ENCODE measurements at regions of chr10 and their contacts with region 1.

Region 1: GRCh38 chr10:25113191-25114035 is 61.4 kb upstream of the GPR158 start:
- DNase-seq: no peak
- ATAC-seq: peak; percentile 31
- H3K4me3 Mint-ChIP-seq: no peak overlapping the region
- H3K27ac Mint-ChIP-seq: no peak overlapping the region
- H3K4me1 Mint-ChIP-seq: peaks cover 2% of the 10 kb centered on the region
- H3K27me3 Mint-ChIP-seq: peaks cover 16% of the 10 kb centered on the region
- CTCF ChIP-seq: no peak

Region 2: GRCh38 chr10:25713894-25714240 is 600.5 kb after region 1 on chr10:
- CTCF ChIA-PET with region 1: interaction called, 21 read pairs
- POLR2A ChIA-PET with region 1: no interaction called
- intact Hi-C with region 1: no loop called
- DNase-seq: no peak
- ATAC-seq: no peak
- H3K4me3 Mint-ChIP-seq: no peak overlapping the region
- H3K27ac Mint-ChIP-seq: no peak overlapping the region
- H3K4me1 Mint-ChIP-seq: no peaks in the 10 kb centered on the region
- H3K27me3 Mint-ChIP-seq: peaks cover 10% of the 10 kb centered on the region
- CTCF ChIP-seq: no peak

Measured in activated B cell treated with CpG ODN at 0.5 μM for 24 hours (primary cell).